ENCODE measurements at regions of chr17 and their contacts with region 1.

Region 1: GRCh38 chr17:77444984-77445759 is 304.4 kb downstream of the SEC14L1 start:
- DNase-seq: peak; percentile 97
- H3K4me3 ChIP-seq: peak overlapping the region; percentile 47
- H3K27ac ChIP-seq: peak overlapping the region; percentile 95
- H3K4me1 ChIP-seq: peaks cover 97% of the 10 kb centered on the region
- CTCF ChIP-seq: no peak

Region 2: GRCh38 chr17:76492989-76493501 is 952.1 kb before region 1 on chr17:
- CTCF ChIA-PET with region 1: no interaction called
- POLR2A ChIA-PET with region 1: no interaction called
- intact Hi-C with region 1: loop called (anchors 10 kb)
- DNase-seq: peak; percentile 81
- H3K4me3 ChIP-seq: peak overlapping the region; percentile 41
- H3K27ac ChIP-seq: peak overlapping the region; percentile 83
- H3K4me1 ChIP-seq: peaks cover 85% of the 10 kb centered on the region
- CTCF ChIP-seq: no peak

Region 3: DNA sequence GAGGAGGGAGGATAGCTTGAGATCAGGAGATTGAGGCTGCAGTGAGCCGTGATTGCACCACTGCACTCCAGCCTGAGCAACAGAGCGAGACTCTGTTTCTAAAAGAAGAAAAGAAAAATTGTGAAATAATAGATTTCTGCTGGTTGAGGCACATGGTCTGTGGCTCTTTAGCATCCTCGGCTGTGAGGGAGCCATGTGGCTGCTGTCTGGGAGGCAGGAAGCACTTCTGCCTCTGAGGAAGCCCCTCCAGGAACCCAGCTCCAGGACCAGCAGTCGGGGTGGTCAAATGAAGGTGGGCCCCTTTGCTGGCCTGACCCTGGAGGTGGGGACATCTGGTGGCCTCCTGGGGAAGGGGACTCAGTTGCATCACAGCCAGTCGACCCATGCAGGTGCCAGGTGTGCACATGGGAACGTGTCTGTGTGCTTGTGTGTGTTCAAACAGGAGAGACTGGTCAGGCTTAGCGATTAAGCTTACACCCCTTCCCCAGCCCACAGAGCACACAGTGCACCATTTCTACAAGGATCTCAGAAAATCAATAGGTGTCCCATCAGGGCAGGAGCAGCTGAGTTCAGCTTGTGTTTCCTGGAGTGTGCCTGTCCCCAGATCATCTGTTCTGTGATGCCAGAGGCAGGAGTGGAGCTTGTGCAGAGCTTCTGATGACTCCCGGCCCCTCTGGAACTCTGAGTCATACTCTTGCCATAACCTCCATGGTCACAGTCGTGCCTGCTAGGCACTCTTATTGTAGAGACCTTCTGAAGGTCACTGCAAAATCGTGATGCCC is 601.3 kb before region 1 on chr17:
- CTCF ChIA-PET with region 1: no interaction called
- POLR2A ChIA-PET with region 1: no interaction called
- intact Hi-C with region 1: loop called (anchors 10 kb)
- DNase-seq: peak; percentile 92
- H3K4me3 ChIP-seq: peak overlapping the region; percentile 29
- H3K27ac ChIP-seq: peak overlapping the region; percentile 93
- H3K4me1 ChIP-seq: peaks cover 99% of the 10 kb centered on the region
- CTCF ChIP-seq: peak; percentile 72

Region 4: GRCh38 chr17:77404812-77405581 is 40.2 kb before region 1 on chr17:
- CTCF ChIA-PET with region 1: interaction called, 12 read pairs
- POLR2A ChIA-PET with region 1: interaction called, 29 read pairs
- intact Hi-C with region 1: loop called (anchors 1 kb)
- DNase-seq: peak; percentile 97
- H3K4me3 ChIP-seq: peak overlapping the region; percentile 72
- H3K27ac ChIP-seq: peak overlapping the region; percentile 90
- H3K4me1 ChIP-seq: peaks cover 100% of the 10 kb centered on the region
- CTCF ChIP-seq: 0 out of 2 replicates have a peak, but pooled peaks have one; percentile 25

Region 5: DNA sequence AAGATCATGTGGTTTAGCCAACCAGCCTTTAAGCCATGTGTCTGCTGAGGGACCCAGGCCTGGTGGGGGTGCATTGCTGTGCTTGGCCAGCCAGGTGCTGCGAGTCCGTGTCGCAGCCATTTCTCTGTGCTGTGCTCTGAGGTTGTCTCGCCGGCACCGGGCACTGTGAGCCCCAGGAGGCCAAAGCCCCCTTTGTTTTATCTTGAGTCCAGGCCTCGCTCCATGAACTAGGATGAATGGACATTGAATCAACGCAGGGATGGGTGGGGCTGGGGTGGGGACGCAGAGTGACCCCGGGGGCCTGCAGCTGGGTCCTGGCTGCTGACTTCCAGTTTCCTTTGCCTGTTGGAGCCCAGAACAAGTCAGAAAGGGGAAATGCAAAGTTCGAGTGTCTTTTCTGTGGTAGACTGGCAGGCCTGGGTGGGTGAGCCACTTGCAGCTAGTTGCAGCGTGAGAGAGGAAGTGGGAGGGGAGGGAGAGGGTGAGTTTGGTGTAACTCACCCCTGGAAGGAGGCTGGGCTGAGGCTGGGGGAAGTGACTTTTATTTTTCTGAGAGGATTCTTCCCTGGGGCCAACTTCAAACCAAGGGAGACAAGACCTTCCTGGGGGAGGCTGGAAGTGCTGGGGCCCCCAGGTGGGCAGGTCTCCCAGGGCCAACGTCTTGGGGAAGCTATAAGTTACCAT is 20.3 kb after region 1 on chr17:
- CTCF ChIA-PET with region 1: interaction called, 3 read pairs
- POLR2A ChIA-PET with region 1: interaction called, 60 read pairs
- intact Hi-C with region 1: loop called (anchors 1 kb)
- DNase-seq: peak; percentile 96
- H3K4me3 ChIP-seq: peak overlapping the region; percentile 52
- H3K27ac ChIP-seq: peak overlapping the region; percentile 95
- H3K4me1 ChIP-seq: peaks cover 97% of the 10 kb centered on the region
- CTCF ChIP-seq: no peak

Region 6: GRCh38 chr17:78128551-78129350 is 683.6 kb after region 1 on chr17 and contains the start of gene TMC6:
- CTCF ChIA-PET with region 1: no interaction called
- POLR2A ChIA-PET with region 1: no interaction called
- intact Hi-C with region 1: loop called (anchors 5 kb)
- DNase-seq: peak; percentile 86
- H3K4me3 ChIP-seq: peak within 1 kb of the TSS; percentile 81
- H3K27ac ChIP-seq: peak within 1 kb of the TSS; percentile 91
- H3K4me1 ChIP-seq: peaks cover 85% of the 10 kb centered on the region
- CTCF ChIP-seq: no peak
- total RNA-seq, gene TMC6: 94.0 and 124 TPM in 2 replicates

Measured in OCI-LY7 (cell line).